CD4-positive, alpha-beta T cell (primary cell): ENCODE measurements at regions of chr3 and their contacts with region 1.

Region 1: DNA sequence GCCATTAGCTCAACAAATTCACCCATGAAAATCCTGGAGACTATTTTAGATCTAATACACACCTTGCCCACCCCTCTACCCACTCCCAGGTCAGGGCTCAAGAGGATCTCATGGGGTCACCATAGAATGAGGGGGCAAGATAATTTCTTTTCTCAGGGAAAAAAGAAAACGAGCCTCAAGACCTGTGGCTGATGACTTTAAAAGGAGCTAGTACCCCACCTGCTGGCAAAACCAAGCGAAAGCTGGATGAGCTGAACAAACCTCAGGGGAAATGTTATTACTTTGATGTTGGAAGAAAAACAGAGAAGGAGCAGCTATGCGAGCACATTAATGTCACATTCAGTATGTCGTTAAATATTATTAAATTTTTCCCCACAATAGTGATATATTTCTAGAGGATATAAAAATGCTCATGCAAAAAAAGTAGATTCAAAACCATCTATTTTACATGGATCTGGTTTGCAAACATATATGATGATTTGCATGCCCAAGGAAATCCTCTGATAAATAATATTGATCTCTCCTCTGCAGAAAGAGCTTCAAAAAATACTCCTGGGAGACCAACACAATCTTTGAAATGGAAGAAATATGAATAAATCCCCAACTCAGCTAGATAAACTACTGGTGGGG is 37.7 kb downstream of the PLD1 start:
- DNase-seq: peak; percentile 6 to 66 (median 27)
- ATAC-seq: no peak
- H3K4me3 ChIP-seq: no peak overlapping the region
- H3K4me3 Mint-ChIP-seq: no peak overlapping the region
- H3K27ac ChIP-seq: no peak overlapping the region
- H3K27ac Mint-ChIP-seq: no peak overlapping the region
- H3K4me1 ChIP-seq: no peaks in the 10 kb centered on the region
- H3K4me1 Mint-ChIP-seq: no peaks in the 10 kb centered on the region
- H3K27me3 ChIP-seq: no peaks in the 10 kb centered on the region
- H3K27me3 Mint-ChIP-seq: peaks cover 8% of the 10 kb centered on the region
- CTCF ChIP-seq: peak; percentile 72

Region 2: GRCh38 chr3:170961616-170962400 is 810.7 kb before region 1 on chr3:
- CTCF ChIA-PET with region 1: interaction called, 8 read pairs
- POLR2A ChIA-PET with region 1: no interaction called
- intact Hi-C with region 1: loop called (anchors 1 to 2 kb)
- DNase-seq: peak in 4 of 14 experiments; percentile 4 to 45 (median 36)
- ATAC-seq: no peak
- H3K4me3 ChIP-seq: no peak overlapping the region
- H3K4me3 Mint-ChIP-seq: no peak overlapping the region
- H3K27ac ChIP-seq: no peak overlapping the region
- H3K27ac Mint-ChIP-seq: no peak overlapping the region
- H3K4me1 ChIP-seq: no peaks in the 10 kb centered on the region
- H3K4me1 Mint-ChIP-seq: no peaks in the 10 kb centered on the region
- H3K27me3 ChIP-seq: no peaks in the 10 kb centered on the region
- H3K27me3 Mint-ChIP-seq: peaks cover 7% of the 10 kb centered on the region
- CTCF ChIP-seq: peak; percentile 64

Region 3: GRCh38 chr3:171049861-171050444 is 722.6 kb before region 1 on chr3:
- CTCF ChIA-PET with region 1: no interaction called
- POLR2A ChIA-PET with region 1: no interaction called
- intact Hi-C with region 1: loop called in 1 of 2 experiments (anchors 2 kb)
- DNase-seq: peak; percentile 4 to 56 (median 26)
- ATAC-seq: peak; percentile 61
- H3K4me3 ChIP-seq: no peak overlapping the region
- H3K4me3 Mint-ChIP-seq: no peak overlapping the region
- H3K27ac ChIP-seq: no peak overlapping the region
- H3K27ac Mint-ChIP-seq: no peak overlapping the region
- H3K4me1 ChIP-seq: no peaks in the 10 kb centered on the region
- H3K4me1 Mint-ChIP-seq: no peaks in the 10 kb centered on the region
- H3K27me3 ChIP-seq: no peaks in the 10 kb centered on the region
- H3K27me3 Mint-ChIP-seq: peaks cover 10% of the 10 kb centered on the region
- CTCF ChIP-seq: peak; percentile 50

Region 4: DNA sequence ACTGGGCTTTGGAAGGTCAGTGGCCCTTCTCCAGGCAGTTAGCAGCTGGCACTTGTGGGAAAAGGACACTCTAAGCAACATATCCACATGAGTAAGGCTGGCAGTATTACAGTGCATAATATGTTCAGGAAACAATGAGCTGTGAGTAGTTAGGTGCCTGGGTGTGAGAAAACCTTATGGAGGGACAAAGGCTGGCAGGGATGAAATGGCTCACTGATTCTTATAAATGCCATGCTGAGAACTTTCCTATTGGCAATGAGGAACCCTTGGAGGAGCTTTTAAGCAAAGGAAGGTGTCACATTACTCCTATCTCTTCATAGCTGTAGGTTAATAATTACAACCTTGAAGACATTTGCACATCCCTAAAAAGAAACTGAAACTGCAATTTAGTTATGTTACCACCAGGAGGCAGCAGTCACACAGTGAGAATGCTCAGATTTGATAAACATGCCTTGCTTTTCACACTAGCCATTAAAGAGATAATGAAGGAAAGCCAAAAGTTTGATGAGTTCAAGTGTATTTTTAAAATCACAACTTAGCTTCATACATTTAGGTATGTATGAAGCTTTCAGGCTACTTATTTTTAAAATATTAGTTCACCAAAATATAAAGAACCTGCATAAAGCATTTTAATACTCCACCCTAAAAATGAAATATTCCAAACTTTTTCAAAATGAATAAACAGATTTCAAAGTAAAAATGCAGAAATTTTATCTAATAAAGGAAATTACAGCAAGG is 609.4 kb before region 1 on chr3:
- CTCF ChIA-PET with region 1: no interaction called
- POLR2A ChIA-PET with region 1: no interaction called
- intact Hi-C with region 1: loop called in 1 of 2 experiments (anchors 2 kb)
- DNase-seq: peak in 4 of 14 experiments; percentile 11 to 62 (median 56)
- ATAC-seq: no peak
- H3K4me3 ChIP-seq: no peak overlapping the region
- H3K4me3 Mint-ChIP-seq: no peak overlapping the region
- H3K27ac ChIP-seq: no peak overlapping the region
- H3K27ac Mint-ChIP-seq: no peak overlapping the region
- H3K4me1 ChIP-seq: peaks cover 8% of the 10 kb centered on the region
- H3K4me1 Mint-ChIP-seq: peaks cover 32% of the 10 kb centered on the region
- H3K27me3 ChIP-seq: no peaks in the 10 kb centered on the region
- H3K27me3 Mint-ChIP-seq: no peaks in the 10 kb centered on the region
- CTCF ChIP-seq: peak; percentile 77